Sigmoid colon (tissue), 7 donors: ENCODE measurements at regions of chr2 and their contacts with region 1.

Region 1: GRCh38 chr2:159286709-159287441 is 372 bp upstream of the WDSUB1 start:
- DNase-seq: peak; percentile 98
- H3K4me3 ChIP-seq: peak overlapping the region; percentile 74 to 99 (median 84)
- H3K27ac ChIP-seq: peak overlapping the region; percentile 87 to 88 (median 88)
- H3K4me1 ChIP-seq: peaks cover 0 to 23% (median 11%) of the 10 kb centered on the region in 4 donors
- H3K27me3 ChIP-seq: no peaks in the 10 kb centered on the region
- CTCF ChIP-seq: no peak
- EP300 ChIP-seq: no peak
- POLR2A ChIP-seq: peak; percentile 56 to 63

Region 2: GRCh38 chr2:157876066-157876787 is 1410.6 kb before region 1 on chr2 and contains the start of gene ACVR1:
- intact Hi-C with region 1: loop called (anchors 10 kb)
- DNase-seq: peak; percentile 98
- H3K4me3 ChIP-seq: peak within 1 kb of the TSS; percentile 86 to 90 (median 89)
- H3K27ac ChIP-seq: peak within 1 kb of the TSS; percentile 94 to 97 (median 96)
- H3K4me1 ChIP-seq: peaks cover 0 to 44% (median 28%) of the 10 kb centered on the region in 4 donors
- H3K27me3 ChIP-seq: no peaks in the 10 kb centered on the region
- CTCF ChIP-seq: no peak
- EP300 ChIP-seq: no peak
- POLR2A ChIP-seq: peak in 1 of 2 donors; percentile 35
- total RNA-seq, gene ACVR1: 20.0 to 36.0 (median 21.9) TPM

Region 3: GRCh38 chr2:158903711-158904443 is 383.0 kb before region 1 on chr2:
- intact Hi-C with region 1: loop called (anchors 10 kb)
- DNase-seq: no peak
- H3K4me3 ChIP-seq: no peak overlapping the region
- H3K27ac ChIP-seq: peak overlapping the region in 1 of 4 donors; percentile 51
- H3K4me1 ChIP-seq: peaks cover 0 to 29% (median 22%) of the 10 kb centered on the region in 4 donors
- H3K27me3 ChIP-seq: no peaks in the 10 kb centered on the region
- CTCF ChIP-seq: no peak
- EP300 ChIP-seq: peak in 1 of 4 donors; percentile 13
- POLR2A ChIP-seq: no peak

Region 4: DNA sequence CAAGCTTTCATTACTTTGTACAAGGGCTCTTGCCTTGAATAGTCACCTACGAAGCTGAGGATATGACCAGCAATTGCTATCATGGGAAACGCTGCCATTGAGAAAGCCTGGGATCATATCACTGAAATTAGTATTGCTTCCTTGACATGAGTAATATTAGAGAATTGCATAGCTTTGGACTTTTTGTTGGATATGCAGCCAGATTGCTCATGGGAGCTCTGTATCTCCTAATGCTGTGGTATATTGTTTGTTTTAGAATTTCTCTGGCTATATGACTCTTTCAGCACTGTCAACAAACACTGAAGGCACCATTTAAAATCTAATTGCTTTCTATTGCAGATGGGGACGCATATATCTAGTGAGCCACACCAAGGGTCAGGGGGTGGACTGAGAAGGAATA is 79.7 kb after region 1 on chr2:
- intact Hi-C with region 1: no loop called
- DNase-seq: no peak
- H3K4me3 ChIP-seq: no peak overlapping the region
- H3K27ac ChIP-seq: no peak overlapping the region
- H3K4me1 ChIP-seq: no peaks in the 10 kb centered on the region
- H3K27me3 ChIP-seq: no peaks in the 10 kb centered on the region
- CTCF ChIP-seq: no peak
- EP300 ChIP-seq: no peak
- POLR2A ChIP-seq: no peak

Region 5: GRCh38 chr2:159615140-159615951 is 328.5 kb after region 1 on chr2:
- intact Hi-C with region 1: loop called (anchors 10 kb)
- DNase-seq: peak; percentile 97
- H3K4me3 ChIP-seq: peak overlapping the region; percentile 75 to 94 (median 85)
- H3K27ac ChIP-seq: peak overlapping the region; percentile 95 to 99 (median 98)
- H3K4me1 ChIP-seq: peaks cover 0 to 48% (median 32%) of the 10 kb centered on the region in 4 donors
- H3K27me3 ChIP-seq: no peaks in the 10 kb centered on the region
- CTCF ChIP-seq: no peak
- EP300 ChIP-seq: no peak
- POLR2A ChIP-seq: peak; percentile 88 to 89